BJ (cell line): ENCODE measurements at regions of chr7 and their contacts with region 1.

Region 1: DNA sequence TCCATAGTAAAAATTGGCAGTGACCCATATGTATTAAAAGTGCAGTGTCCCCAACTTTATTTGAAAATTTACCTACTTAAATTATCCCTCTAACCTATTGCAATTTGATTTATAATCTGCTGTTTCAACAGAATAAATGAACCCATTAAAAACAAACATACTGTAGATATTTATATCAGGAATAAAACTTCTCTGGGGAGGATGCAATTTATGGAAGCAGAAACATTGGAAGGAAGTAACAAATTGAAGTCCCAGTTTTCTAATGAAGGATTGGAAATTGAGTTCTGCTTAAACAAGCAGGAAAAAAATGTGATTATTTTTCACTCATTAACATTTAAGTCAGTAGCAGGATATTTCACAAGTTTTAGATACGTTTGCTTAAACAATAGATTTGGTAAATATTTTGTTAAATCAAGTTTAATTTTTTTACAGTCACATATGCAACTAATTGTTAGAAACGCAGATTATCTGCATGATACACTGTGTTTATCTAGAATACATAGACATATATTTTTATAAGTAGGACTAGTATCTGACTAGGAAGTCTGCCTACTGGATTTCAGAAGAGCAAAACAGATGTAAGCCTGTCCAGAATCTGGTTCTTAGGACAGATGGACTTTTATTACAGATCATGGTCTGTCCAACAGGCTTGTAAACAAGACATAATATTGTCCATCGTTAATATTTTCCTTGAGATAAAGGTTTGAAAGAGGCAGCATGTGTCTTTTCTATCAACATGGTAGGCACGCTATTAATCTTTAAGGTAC is 5.3 kb downstream of the AGMO start:
- DNase-seq: no peak
- H3K4me3 ChIP-seq: no peak overlapping the region
- H3K27me3 ChIP-seq: no peaks in the 10 kb centered on the region
- CTCF ChIP-seq: no peak

Region 2: GRCh38 chr7:15571301-15571878 is 14.9 kb after region 1 on chr7:
- CTCF ChIA-PET with region 1: no interaction called
- POLR2A ChIA-PET with region 1: no interaction called
- DNase-seq: no peak
- H3K4me3 ChIP-seq: no peak overlapping the region
- H3K27me3 ChIP-seq: no peaks in the 10 kb centered on the region
- CTCF ChIP-seq: no peak

Region 3: GRCh38 chr7:16554518-16555236 is 998.2 kb after region 1 on chr7:
- CTCF ChIA-PET with region 1: no interaction called
- POLR2A ChIA-PET with region 1: interaction called, 15 read pairs
- DNase-seq: no peak
- H3K4me3 ChIP-seq: no peak overlapping the region
- H3K27me3 ChIP-seq: no peaks in the 10 kb centered on the region
- CTCF ChIP-seq: no peak